Heart left ventricle (tissue), 16 donors: ENCODE measurements at regions of chr14 and their contacts with region 1.

Region 1: DNA sequence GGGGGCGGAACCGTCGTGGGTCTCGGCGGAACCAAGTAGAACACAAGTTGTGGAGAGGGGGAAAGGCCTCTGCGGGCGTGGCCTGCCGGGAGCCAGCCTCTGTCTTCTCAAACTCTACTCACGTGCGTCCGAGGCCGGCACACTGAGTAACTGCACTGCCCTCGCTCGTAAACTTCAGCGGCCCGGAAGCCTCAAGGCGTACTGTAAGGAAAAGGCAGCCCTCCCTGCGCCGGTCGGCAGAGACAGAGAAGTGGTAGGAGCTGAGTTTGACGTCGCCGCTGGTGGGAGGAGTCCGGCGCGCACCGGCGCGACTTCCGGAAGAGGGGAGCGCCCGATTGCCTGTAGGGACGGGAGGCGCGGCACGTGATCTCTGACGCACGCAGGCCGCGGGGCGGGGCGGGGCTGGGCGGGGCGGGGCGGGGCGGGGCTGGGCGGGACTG is at the start of gene FBXO33:
- DNase-seq: peak; percentile 97 to 99 (median 97)
- ATAC-seq: peak; percentile 92 to 96 (median 95)
- H3K4me3 ChIP-seq: peak within 1 kb of the TSS; percentile 71 to 97 (median 92)
- H3K27ac ChIP-seq: peak within 1 kb of the TSS; percentile 92 to 100 (median 99)
- H3K4me1 ChIP-seq: peaks cover 0 to 44% (median 32%) of the 10 kb centered on the region in 12 donors
- H3K27me3 ChIP-seq: no peaks in the 10 kb centered on the region
- CTCF ChIP-seq: no peak
- POLR2A ChIP-seq: peak in 1 of 2 donors; percentile 30
- total RNA-seq, gene FBXO33: 3.8 to 8.4 (median 5.8) TPM

Region 2: GRCh38 chr14:38837343-38838048 is 594.7 kb before region 1 on chr14:
- intact Hi-C with region 1: no loop called
- DNase-seq: peak in 2 of 5 donors; percentile 19 to 50
- ATAC-seq: peak in 3 of 4 donors; percentile 25 to 42 (median 37)
- H3K4me3 ChIP-seq: no peak overlapping the region
- H3K27ac ChIP-seq: peak overlapping the region in 1 of 12 donors; percentile 13
- H3K4me1 ChIP-seq: peaks cover 0 to 20% (median 2%) of the 10 kb centered on the region in 12 donors
- H3K27me3 ChIP-seq: no peaks in the 10 kb centered on the region
- CTCF ChIP-seq: no peak
- POLR2A ChIP-seq: no peak

Region 3: GRCh38 chr14:39174560-39175444 is 257.4 kb before region 1 on chr14 and contains the start of gene PNN:
- intact Hi-C with region 1: loop called in 7 of 10 experiments (anchors 1 to 10 kb)
- DNase-seq: peak; percentile 97 to 99 (median 97)
- ATAC-seq: peak; percentile 96 to 98 (median 96)
- H3K4me3 ChIP-seq: peak within 1 kb of the TSS; percentile 39 to 97 (median 80)
- H3K27ac ChIP-seq: peak within 1 kb of the TSS; percentile 77 to 95 (median 93)
- H3K4me1 ChIP-seq: peaks cover 0 to 31% (median 23%) of the 10 kb centered on the region in 12 donors
- H3K27me3 ChIP-seq: no peaks in the 10 kb centered on the region
- CTCF ChIP-seq: no peak
- POLR2A ChIP-seq: peak; percentile 46 to 93
- total RNA-seq, gene PNN: 6.9 to 26.7 (median 21.0) TPM

Region 4: GRCh38 chr14:39276005-39276404 is 156.2 kb before region 1 on chr14:
- intact Hi-C with region 1: loop called in 1 of 10 experiments (anchors 10 kb)
- DNase-seq: no peak
- ATAC-seq: peak in 1 of 4 donors; percentile 34
- H3K4me3 ChIP-seq: no peak overlapping the region
- H3K27ac ChIP-seq: no peak overlapping the region
- H3K4me1 ChIP-seq: peaks cover 0 to 14% (median 0%) of the 10 kb centered on the region in 12 donors
- H3K27me3 ChIP-seq: no peaks in the 10 kb centered on the region
- CTCF ChIP-seq: no peak
- POLR2A ChIP-seq: no peak

Region 5: GRCh38 chr14:39368261-39368959 is 63.8 kb before region 1 on chr14:
- intact Hi-C with region 1: no loop called
- DNase-seq: peak in 4 of 5 donors; percentile 26 to 50 (median 38)
- ATAC-seq: peak; percentile 70 to 84 (median 80)
- H3K4me3 ChIP-seq: no peak overlapping the region
- H3K27ac ChIP-seq: no peak overlapping the region
- H3K4me1 ChIP-seq: peaks cover 0 to 18% (median 0%) of the 10 kb centered on the region in 12 donors
- H3K27me3 ChIP-seq: no peaks in the 10 kb centered on the region
- CTCF ChIP-seq: peak in 11 of 12 donors; percentile 5 to 67 (median 50)
- POLR2A ChIP-seq: no peak

Region 6: DNA sequence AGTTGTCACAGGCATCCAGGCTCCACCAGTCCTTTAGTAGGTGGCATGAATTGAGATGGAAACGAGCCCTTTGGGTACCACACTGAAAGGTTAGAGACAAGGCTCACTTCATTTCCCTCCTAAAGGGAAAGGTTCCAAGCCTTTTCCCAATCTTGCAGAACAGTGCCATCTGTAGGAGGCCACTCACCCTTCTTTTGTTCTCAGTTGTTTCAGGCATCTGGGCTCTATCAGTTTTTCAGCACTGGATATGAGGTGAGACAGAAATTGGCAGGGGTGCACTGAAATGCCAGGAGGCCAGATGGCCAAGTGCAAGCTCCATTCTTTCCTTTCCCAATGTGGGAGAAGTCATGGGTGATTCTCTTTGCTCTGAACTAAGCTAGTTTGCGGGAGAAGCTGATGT is 15.2 kb before region 1 on chr14:
- intact Hi-C with region 1: no loop called
- DNase-seq: peak in 4 of 5 donors; percentile 20 to 46 (median 34)
- ATAC-seq: peak; percentile 90 to 96 (median 92)
- H3K4me3 ChIP-seq: no peak overlapping the region
- H3K27ac ChIP-seq: no peak overlapping the region
- H3K4me1 ChIP-seq: peaks cover 0 to 13% (median 2%) of the 10 kb centered on the region in 12 donors
- H3K27me3 ChIP-seq: no peaks in the 10 kb centered on the region
- CTCF ChIP-seq: peak in 9 of 12 donors; percentile 28 to 53 (median 33)
- POLR2A ChIP-seq: no peak

Region 7: GRCh38 chr14:39469094-39469710 is 37.0 kb after region 1 on chr14:
- intact Hi-C with region 1: no loop called
- DNase-seq: no peak
- ATAC-seq: peak in 2 of 4 donors; percentile 16 to 57
- H3K4me3 ChIP-seq: no peak overlapping the region
- H3K27ac ChIP-seq: no peak overlapping the region
- H3K4me1 ChIP-seq: no peaks in the 10 kb centered on the region
- H3K27me3 ChIP-seq: no peaks in the 10 kb centered on the region
- CTCF ChIP-seq: peak in 4 of 12 donors; percentile 9 to 33 (median 20)
- POLR2A ChIP-seq: no peak